ENCODE measurements at regions of chr11 and their contacts with region 1.

Region 1: DNA sequence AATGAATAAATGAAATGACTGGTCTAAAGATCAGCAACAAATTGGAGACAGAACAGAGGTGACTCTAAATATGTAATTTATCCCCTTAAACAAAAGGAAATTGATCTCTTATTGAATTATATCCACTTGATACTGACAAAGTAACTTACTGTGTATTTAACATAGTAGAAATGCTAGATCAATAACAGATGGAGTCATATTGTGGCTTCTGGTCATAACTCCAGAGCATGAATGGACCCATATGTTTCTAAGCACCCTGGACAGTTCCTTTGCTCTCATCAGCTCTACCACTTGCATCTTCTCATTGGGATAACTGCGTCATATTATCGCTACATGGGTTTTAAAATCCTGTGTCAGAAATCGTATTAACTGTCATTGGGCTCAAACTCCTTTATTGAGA is 222.3 kb downstream of the ETS1 start:
- DNase-seq: peak; percentile 85
- ATAC-seq: peak; percentile 63
- H3K4me3 ChIP-seq: no peak overlapping the region
- H3K27ac ChIP-seq: no peak overlapping the region
- H3K4me1 ChIP-seq: peaks cover 11% of the 10 kb centered on the region
- H3K27me3 ChIP-seq: peaks cover 1% of the 10 kb centered on the region; the same call in 1 of the 2 replicates
- CTCF ChIP-seq: no peak
- POLR2A ChIP-seq: no peak
- RAD21 ChIP-seq: no peak

Region 2: GRCh38 chr11:128399251-128400121 is 34.4 kb after region 1 on chr11:
- CTCF ChIA-PET with region 1: no interaction called
- POLR2A ChIA-PET with region 1: interaction called, 15 read pairs
- dilution Hi-C with region 1: no loop called
- in situ Hi-C with region 1: no loop called
- intact Hi-C with region 1: no loop called
- DNase-seq: peak; percentile 87
- ATAC-seq: peak; percentile 81
- H3K4me3 ChIP-seq: no peak overlapping the region
- H3K27ac ChIP-seq: no peak overlapping the region; the same call in 1 of the 2 replicates
- H3K4me1 ChIP-seq: peaks cover 5% of the 10 kb centered on the region
- H3K27me3 ChIP-seq: no peaks in the 10 kb centered on the region
- CTCF ChIP-seq: no peak
- POLR2A ChIP-seq: no peak
- RAD21 ChIP-seq: 0 out of 2 replicates have a peak, but pooled peaks have one; percentile 4

Region 3: GRCh38 chr11:128686745-128687177 is 321.7 kb after region 1 on chr11:
- CTCF ChIA-PET with region 1: no interaction called
- POLR2A ChIA-PET with region 1: no interaction called
- dilution Hi-C with region 1: no loop called
- in situ Hi-C with region 1: no loop called
- intact Hi-C with region 1: no loop called
- DNase-seq: peak; percentile 50
- ATAC-seq: peak; percentile 63
- H3K4me3 ChIP-seq: peak overlapping the region; percentile 1; the same call in 1 of the 2 replicates
- H3K27ac ChIP-seq: no peak overlapping the region
- H3K4me1 ChIP-seq: peaks cover 2% of the 10 kb centered on the region
- H3K27me3 ChIP-seq: peaks cover 94% of the 10 kb centered on the region
- CTCF ChIP-seq: no peak
- POLR2A ChIP-seq: no peak
- RAD21 ChIP-seq: no peak